ENCODE measurements at regions of chr7 and their contacts with region 1.

Region 1: DNA sequence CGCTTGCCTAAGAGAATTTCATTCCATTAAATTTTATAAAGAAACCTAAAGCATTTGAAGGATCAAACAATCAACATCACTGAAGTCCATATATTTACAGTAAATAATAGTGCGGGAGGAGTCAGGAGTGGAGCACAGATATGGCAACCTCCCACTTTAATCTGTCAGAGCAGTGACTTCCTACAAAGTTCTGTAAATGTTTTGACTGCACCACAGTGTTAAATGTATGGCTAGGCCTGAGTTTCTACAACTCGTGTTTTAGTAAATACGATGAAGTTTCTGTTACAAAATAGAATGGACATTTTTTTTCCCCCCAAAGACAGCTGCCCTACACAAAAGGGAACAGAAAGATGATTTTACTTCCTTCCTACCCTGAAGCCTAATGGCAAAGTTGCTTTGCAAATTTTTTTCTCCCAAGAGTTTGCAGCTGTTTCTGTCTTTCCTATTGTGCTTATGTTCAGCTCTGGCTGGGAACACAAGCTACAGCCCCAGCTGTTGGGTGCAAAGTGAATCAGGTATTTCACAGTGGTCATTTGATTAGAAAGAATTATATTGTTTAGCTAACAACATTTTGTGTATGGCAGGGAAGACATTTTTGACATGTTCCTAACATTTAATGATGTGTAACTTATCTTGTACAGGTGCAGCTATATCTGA is 62.1 kb downstream of the MET start:
- DNase-seq: no peak
- H3K4me3 ChIP-seq: no peak overlapping the region
- H3K27ac ChIP-seq: no peak overlapping the region
- H3K4me1 ChIP-seq: peaks cover 13% of the 10 kb centered on the region
- H3K27me3 ChIP-seq: no peaks in the 10 kb centered on the region
- CTCF ChIP-seq: no peak

Region 2: DNA sequence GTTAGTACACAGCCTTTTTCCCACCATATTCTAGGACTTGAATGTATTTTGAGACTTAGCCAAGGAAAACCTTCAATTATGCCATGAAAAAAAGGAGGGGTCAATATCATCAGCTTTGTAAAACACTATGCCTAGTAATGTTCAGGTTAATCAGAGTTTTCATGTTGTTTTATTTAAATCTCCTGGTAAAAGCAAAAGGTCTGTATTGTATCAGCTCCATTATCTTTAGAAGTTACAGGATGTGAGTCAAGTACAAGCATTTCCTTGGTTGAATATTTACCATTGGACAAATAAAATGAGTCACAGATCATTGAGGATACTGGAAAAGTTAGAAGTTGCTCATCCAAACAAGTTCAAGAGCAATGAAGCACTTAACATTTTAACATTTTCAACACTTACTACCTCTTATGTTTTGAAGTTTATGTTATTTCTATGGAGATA is 38.4 kb after region 1 on chr7:
- CTCF ChIA-PET with region 1: no interaction called
- POLR2A ChIA-PET with region 1: no interaction called
- intact Hi-C with region 1: loop called (anchors 5 kb)
- DNase-seq: peak in 1 of 2 experiments; percentile 94
- H3K4me3 ChIP-seq: no peak overlapping the region
- H3K27ac ChIP-seq: peak overlapping the region; percentile 83
- H3K4me1 ChIP-seq: peaks cover 54% of the 10 kb centered on the region
- H3K27me3 ChIP-seq: no peaks in the 10 kb centered on the region
- CTCF ChIP-seq: no peak